ENCODE measurements at regions of chrX and their contacts with region 1.

Region 1: GRCh38 chrX:47637546-47638195 is 7.9 kb upstream of the CFP start:
- DNase-seq: peak; percentile 28
- H3K4me3 ChIP-seq: peak overlapping the region in 1 of 4 donors; percentile 34
- H3K27ac ChIP-seq: no peak overlapping the region
- H3K4me1 ChIP-seq: no peaks in the 10 kb centered on the region
- H3K27me3 ChIP-seq: no peaks in the 10 kb centered on the region
- CTCF ChIP-seq: peak in 1 of 5 experiments; percentile 6
- EP300 ChIP-seq: no peak
- POLR2A ChIP-seq: no peak

Region 2: GRCh38 chrX:47573394-47574075 is 64.1 kb before region 1 on chrX:
- in situ Hi-C with region 1: loop called in 1 of 4 experiments (anchors 10 kb)
- intact Hi-C with region 1: loop called (anchors 10 kb)
- DNase-seq: peak; percentile 47
- H3K4me3 ChIP-seq: peak overlapping the region in 3 of 4 donors; percentile 10 to 40 (median 30)
- H3K27ac ChIP-seq: peak overlapping the region; percentile 67 to 77 (median 70)
- H3K4me1 ChIP-seq: peaks cover 0 to 14% (median 8%) of the 10 kb centered on the region in 4 donors
- H3K27me3 ChIP-seq: no peaks in the 10 kb centered on the region
- CTCF ChIP-seq: no peak
- EP300 ChIP-seq: no peak
- POLR2A ChIP-seq: no peak

Measured in transverse colon (tissue), 4 donors.